ENCODE measurements at regions of chr12 and their contacts with region 1.

Region 1: DNA sequence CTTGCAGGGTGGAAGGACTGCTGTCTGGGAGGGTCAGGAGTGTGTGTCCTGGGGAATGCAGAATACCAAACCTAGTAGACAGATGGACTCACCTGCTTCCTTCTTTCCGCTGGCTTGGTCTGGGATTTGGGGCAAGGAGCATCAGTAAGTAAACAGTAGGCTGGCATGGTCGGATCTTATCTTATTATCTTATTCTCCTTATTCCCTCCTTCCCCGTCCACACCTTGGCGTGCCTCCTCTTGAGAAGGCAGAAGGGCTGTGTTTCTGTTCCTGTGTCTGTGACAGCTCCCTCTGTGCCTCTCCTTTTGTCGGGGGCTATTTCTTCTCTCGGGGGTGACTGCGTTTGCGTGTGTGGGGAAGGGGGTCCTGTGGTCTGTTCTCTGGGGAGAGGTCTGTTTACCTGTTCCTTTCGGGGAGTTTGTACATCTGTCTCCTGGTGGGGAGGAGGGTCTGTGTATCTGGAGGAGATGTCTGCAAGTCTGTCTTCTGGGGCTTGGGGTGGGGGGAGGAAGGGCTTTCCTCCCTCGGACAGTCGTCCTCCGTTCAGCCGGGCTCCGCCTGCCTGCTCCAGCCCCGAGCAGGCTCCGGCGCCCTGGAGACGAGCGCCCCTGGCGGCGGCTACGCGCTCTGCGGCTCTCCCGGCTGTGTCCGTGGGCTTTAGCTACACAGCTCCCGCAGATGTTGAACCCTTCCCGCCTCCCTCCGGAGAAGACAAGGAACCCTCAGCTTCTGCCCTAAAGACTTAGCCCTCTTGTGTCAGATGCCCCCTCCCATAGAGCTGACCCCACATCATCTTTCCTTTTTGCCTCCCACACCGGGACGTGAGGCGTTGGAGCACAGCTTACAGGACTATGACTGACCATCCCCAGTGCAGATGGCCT is 4.3 kb downstream of the KRT86 start:
- DNase-seq: peak; percentile 33 to 96
- H3K4me3 ChIP-seq: peak overlapping the region; percentile 18 to 57 (median 32); a peak in 5 of 8 replicates
- H3K27ac ChIP-seq: no peak overlapping the region
- H3K4me1 ChIP-seq: peaks cover 0 to 4% (median 0%) of the 10 kb centered on the region in 4 experiments; a peak in 1 of 7 replicates
- H3K27me3 ChIP-seq: peaks cover 0 to 12% (median 5%) of the 10 kb centered on the region in 4 experiments; a peak in 4 of 7 replicates
- CTCF ChIP-seq: peak; percentile 93 to 96 (median 95)
- EP300 ChIP-seq: no peak
- POLR2A ChIP-seq: no peak
- RAD21 ChIP-seq: peak; percentile 70 to 80

Region 2: DNA sequence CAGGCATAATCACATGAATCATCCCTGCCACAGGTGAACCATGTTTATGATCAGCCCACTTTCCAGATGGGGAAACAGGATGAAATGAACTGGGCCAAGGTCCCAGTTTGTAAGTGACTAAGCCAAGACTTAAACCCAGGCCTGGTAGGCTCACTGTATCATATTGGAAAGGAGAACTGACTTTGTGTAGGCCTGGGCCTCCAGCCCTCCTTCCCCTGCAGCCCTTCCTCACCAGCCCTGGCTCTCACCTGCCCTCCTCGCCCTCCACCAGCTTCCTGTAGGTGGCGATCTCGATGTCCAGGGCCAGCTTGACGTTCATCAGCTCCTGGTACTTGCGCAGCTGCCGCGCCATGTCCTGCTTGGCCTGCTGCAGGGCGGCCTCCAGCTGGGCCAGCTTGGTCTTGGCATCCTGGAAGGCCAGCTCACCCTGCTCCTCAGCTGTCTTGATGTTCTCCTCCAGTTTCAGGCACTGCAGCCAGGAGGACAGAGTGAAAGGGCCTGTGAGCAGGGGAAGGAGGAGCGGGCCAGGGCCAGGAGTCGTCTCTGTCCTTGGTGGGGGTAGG is 106.8 kb before region 1 on chr12:
- CTCF ChIA-PET with region 1: interaction called, 24 read pairs
- POLR2A ChIA-PET with region 1: no interaction called
- DNase-seq: peak in 1 of 2 experiments; percentile 80
- H3K4me3 ChIP-seq: no peak overlapping the region
- H3K27ac ChIP-seq: no peak overlapping the region
- H3K4me1 ChIP-seq: peaks cover 0 to 2% (median 0%) of the 10 kb centered on the region in 4 experiments; a peak in 2 of 7 replicates
- H3K27me3 ChIP-seq: no peaks in the 10 kb centered on the region
- CTCF ChIP-seq: peak; percentile 79 to 86 (median 81)
- EP300 ChIP-seq: no peak
- POLR2A ChIP-seq: no peak
- RAD21 ChIP-seq: peak; percentile 47 to 67; a peak in 3 of 4 replicates

Region 3: GRCh38 chr12:52221912-52222457 is 56.8 kb before region 1 on chr12:
- CTCF ChIA-PET with region 1: interaction called, 81 read pairs
- POLR2A ChIA-PET with region 1: no interaction called
- DNase-seq: peak; percentile 44 to 96
- H3K4me3 ChIP-seq: no peak overlapping the region
- H3K27ac ChIP-seq: no peak overlapping the region
- H3K4me1 ChIP-seq: peaks cover 0 to 2% (median under 1%) of the 10 kb centered on the region in 4 experiments; a peak in 2 of 7 replicates
- H3K27me3 ChIP-seq: no peaks in the 10 kb centered on the region; a peak in 2 of 7 replicates
- CTCF ChIP-seq: peak; percentile 93 to 98 (median 95)
- EP300 ChIP-seq: no peak
- POLR2A ChIP-seq: no peak
- RAD21 ChIP-seq: peak; percentile 72 to 84

Region 4: DNA sequence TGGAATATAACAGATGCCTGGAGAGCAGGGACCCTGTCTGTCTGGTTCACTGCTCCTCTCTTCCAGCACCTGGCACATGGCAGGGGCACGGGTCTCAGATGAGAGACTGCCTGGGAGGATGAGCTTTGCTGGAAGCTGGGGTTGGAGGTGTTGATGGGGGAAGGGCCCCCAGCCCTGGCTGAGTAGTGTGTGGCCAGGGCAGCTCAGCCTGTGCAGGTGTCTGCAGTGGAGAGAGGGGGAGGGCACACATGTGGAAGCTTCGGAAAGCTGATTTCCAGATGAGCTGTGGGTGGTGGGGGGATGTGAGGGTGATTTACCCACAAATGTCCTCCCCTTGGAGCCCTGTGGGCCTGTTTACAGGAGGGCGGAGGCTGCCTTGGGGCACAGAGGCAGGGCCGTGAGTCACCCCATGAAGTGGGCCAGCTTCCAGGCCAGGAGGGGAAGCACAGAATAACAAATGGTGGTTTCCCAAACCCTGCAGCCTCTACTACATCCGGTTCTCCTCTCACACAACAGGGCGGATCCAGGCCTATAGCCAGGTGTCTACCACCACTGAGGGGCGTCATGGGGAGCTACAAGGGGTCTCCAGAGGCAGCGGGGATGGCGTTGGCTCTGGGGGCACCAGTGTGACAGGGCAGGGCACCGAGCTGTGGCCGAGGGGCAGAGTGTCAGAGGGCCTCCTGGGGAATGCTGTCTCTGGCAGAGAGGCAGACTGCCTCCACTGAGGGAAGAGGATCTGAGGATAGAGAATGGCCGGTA is 34.7 kb before region 1 on chr12:
- CTCF ChIA-PET with region 1: interaction called, 105 read pairs
- POLR2A ChIA-PET with region 1: no interaction called
- DNase-seq: no peak
- H3K4me3 ChIP-seq: no peak overlapping the region
- H3K27ac ChIP-seq: no peak overlapping the region
- H3K4me1 ChIP-seq: peaks cover 0 to 9% (median 5%) of the 10 kb centered on the region in 4 experiments; a peak in 3 of 7 replicates
- H3K27me3 ChIP-seq: peaks cover 0 to 6% (median 3%) of the 10 kb centered on the region in 4 experiments; a peak in 4 of 7 replicates
- CTCF ChIP-seq: no peak
- EP300 ChIP-seq: no peak
- POLR2A ChIP-seq: no peak
- RAD21 ChIP-seq: no peak

Region 5: DNA sequence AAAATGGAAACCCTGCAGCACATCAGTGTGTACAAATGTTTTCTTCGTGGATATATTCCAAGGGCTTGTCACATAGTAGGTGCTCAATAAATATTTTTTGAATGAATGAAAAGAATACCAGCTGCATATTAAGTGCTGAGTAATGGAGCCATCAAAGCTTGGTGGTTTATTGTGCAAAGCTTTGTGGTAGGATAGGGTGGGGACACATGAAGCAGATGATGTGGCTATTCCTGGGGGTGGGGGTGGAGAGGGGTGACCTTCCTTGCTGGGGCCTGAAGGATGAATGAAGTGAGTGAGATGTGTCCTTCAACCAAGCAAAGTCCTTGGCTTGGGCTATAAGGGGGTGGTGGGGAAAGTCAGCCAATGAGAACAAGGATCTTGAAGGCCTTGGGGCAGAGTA is 16.9 kb after region 1 on chr12:
- CTCF ChIA-PET with region 1: interaction called, 36 read pairs
- POLR2A ChIA-PET with region 1: interaction called, 3 read pairs
- DNase-seq: no peak
- H3K4me3 ChIP-seq: no peak overlapping the region
- H3K27ac ChIP-seq: no peak overlapping the region
- H3K4me1 ChIP-seq: 0 out of 7 replicates have a peak, but pooled peaks cover 0 to 2% (median 0%) of the 10 kb centered on the region in 4 experiments
- H3K27me3 ChIP-seq: peaks cover 0 to 2% (median 0%) of the 10 kb centered on the region in 4 experiments; a peak in 1 of 7 replicates
- CTCF ChIP-seq: no peak
- EP300 ChIP-seq: no peak
- POLR2A ChIP-seq: no peak
- RAD21 ChIP-seq: no peak

Region 6: DNA sequence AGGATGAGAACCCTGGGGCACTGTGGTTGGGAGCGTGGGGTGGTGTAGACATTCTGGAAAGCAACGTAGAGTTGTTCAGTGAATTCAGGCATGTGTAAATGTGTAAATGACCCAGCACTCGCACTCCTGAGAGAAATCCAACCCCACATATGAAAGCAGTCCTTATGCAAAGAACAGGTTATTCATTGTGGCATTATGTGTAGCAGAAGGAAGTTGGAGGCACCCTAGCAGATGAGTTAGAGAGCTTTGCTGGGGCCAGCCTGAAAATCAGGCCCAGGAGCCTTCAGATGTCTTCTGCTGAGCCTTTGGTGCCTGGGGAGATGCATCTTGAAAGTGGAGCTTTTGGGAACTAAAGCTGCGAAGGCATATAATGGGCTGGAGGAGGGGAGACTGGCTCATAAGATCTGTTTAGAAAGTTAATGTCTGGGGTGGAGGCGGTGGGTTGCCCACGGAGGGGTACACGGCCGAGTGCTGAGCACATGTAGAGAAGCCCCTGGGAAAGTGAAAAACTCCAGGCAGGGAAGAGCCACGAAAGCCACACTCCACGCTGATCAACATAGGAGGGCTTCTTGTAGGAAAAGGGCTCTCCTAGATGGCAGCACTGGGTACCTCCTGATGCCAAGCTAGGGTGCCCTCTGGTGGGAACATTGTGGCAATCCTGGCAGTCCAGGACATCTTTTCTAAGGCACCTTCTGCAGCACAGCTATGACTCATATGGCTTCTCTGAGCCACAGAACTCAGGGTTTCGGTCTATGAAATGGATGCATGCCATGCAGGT is 48.5 kb after region 1 on chr12:
- CTCF ChIA-PET with region 1: interaction called, 39 read pairs
- POLR2A ChIA-PET with region 1: interaction called, 3 read pairs
- DNase-seq: peak; percentile 67 to 75
- H3K4me3 ChIP-seq: no peak overlapping the region
- H3K27ac ChIP-seq: no peak overlapping the region
- H3K4me1 ChIP-seq: no peaks in the 10 kb centered on the region
- H3K27me3 ChIP-seq: no peaks in the 10 kb centered on the region
- CTCF ChIP-seq: peak; percentile 97 to 100 (median 100)
- EP300 ChIP-seq: no peak
- POLR2A ChIP-seq: no peak
- RAD21 ChIP-seq: peak; percentile 81 to 88